Activated CD4-positive, alpha-beta T cell treated with anti-CD3 and anti-CD28 coated beads for 36 hours (primary cell): ENCODE measurements at regions of chr12 and their contacts with region 1.

Region 1: GRCh38 chr12:42097971-42098370 is 46.7 kb downstream of the GXYLT1 start:
- DNase-seq: peak; percentile 9
- ATAC-seq: peak; percentile 83
- H3K4me3 Mint-ChIP-seq: peak overlapping the region; percentile 72
- H3K27ac Mint-ChIP-seq: peak overlapping the region; percentile 93
- H3K4me1 Mint-ChIP-seq: peaks cover 43% of the 10 kb centered on the region
- H3K27me3 Mint-ChIP-seq: no peaks in the 10 kb centered on the region

Region 2: GRCh38 chr12:41903014-41903708 is 194.8 kb before region 1 on chr12:
- CTCF ChIA-PET with region 1: no interaction called
- POLR2A ChIA-PET with region 1: interaction called, 10 read pairs
- intact Hi-C with region 1: no loop called
- DNase-seq: no peak
- ATAC-seq: no peak
- H3K4me3 Mint-ChIP-seq: no peak overlapping the region
- H3K27ac Mint-ChIP-seq: no peak overlapping the region
- H3K4me1 Mint-ChIP-seq: no peaks in the 10 kb centered on the region
- H3K27me3 Mint-ChIP-seq: peaks cover 2% of the 10 kb centered on the region

Region 3: GRCh38 chr12:42012095-42012494 is 85.9 kb before region 1 on chr12:
- CTCF ChIA-PET with region 1: no interaction called
- POLR2A ChIA-PET with region 1: no interaction called
- intact Hi-C with region 1: no loop called
- DNase-seq: no peak
- ATAC-seq: no peak
- H3K4me3 Mint-ChIP-seq: no peak overlapping the region
- H3K27ac Mint-ChIP-seq: no peak overlapping the region
- H3K4me1 Mint-ChIP-seq: no peaks in the 10 kb centered on the region
- H3K27me3 Mint-ChIP-seq: no peaks in the 10 kb centered on the region

Region 4: GRCh38 chr12:42144408-42145196 is 46.6 kb after region 1 on chr12 and contains the start of gene GXYLT1:
- CTCF ChIA-PET with region 1: interaction called, 3 read pairs
- POLR2A ChIA-PET with region 1: interaction called, 4 read pairs
- intact Hi-C with region 1: loop called in 1 of 2 experiments (anchors 2 kb)
- DNase-seq: peak; percentile 85
- ATAC-seq: peak; percentile 91
- H3K4me3 Mint-ChIP-seq: peak within 1 kb of the TSS; percentile 92
- H3K27ac Mint-ChIP-seq: peak within 1 kb of the TSS; percentile 65
- H3K4me1 Mint-ChIP-seq: peaks cover 34% of the 10 kb centered on the region
- H3K27me3 Mint-ChIP-seq: peaks cover 2% of the 10 kb centered on the region
- total RNA-seq, gene GXYLT1: 6.1 to 6.7 TPM